Activated CD4-positive, alpha-beta T cell treated with anti-CD3 and anti-CD28 coated beads, Interleukin-2, amount 10 ng/mL, durations not matched to agents 24 days and 14 days (primary cell): ENCODE measurements at regions of chr14 and their contacts with region 1.

Region 1: DNA sequence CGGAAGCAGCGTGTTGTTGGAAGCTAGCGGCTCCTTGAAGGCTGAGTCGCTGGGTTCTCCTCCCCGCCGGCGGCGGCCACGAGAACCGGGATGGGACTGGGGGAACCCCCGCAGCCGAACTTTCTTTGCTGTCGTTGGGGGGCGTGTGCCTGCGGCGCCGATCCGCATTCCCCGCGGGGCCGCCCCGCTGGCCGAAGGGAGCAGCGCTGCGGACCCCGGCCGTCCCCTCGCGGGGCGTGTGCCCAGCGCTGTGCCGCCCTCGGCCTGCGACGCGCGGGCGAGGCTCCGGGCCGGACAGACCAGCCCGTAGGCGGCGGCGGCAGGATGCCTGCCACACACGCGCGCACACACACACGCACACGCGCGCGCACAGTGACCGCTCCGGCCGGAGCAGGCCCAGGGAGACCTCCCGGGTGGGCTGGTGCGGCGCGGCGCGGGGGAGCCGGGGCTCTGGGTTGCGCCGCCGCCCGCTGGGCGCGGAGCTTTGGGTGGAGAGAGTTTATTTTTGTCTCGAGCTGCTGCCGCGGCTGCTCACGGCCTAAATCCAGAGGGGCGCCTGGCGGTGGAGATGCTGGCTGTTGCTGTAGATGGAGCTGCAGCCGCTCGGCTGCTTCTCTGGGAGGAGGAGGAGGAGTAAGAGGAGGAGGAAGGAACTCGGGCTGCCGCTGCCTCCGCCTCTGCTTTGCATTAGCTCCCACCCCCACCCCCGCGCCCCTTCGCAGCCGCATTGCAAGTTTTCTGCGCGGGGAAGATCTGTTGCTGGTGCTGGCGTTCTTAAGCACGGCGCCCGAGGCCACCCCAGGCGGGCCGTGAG is at the start of gene SAMD4A:
- DNase-seq: peak; percentile 86
- H3K4me3 Mint-ChIP-seq: peak within 1 kb of the TSS; percentile 93
- H3K27ac Mint-ChIP-seq: peak within 1 kb of the TSS; percentile 87
- H3K4me1 Mint-ChIP-seq: peaks cover 21% of the 10 kb centered on the region
- H3K27me3 Mint-ChIP-seq: peaks cover 45% of the 10 kb centered on the region
- total RNA-seq, gene SAMD4A: 4.6 and 5.7 TPM in 2 replicates

Region 2: DNA sequence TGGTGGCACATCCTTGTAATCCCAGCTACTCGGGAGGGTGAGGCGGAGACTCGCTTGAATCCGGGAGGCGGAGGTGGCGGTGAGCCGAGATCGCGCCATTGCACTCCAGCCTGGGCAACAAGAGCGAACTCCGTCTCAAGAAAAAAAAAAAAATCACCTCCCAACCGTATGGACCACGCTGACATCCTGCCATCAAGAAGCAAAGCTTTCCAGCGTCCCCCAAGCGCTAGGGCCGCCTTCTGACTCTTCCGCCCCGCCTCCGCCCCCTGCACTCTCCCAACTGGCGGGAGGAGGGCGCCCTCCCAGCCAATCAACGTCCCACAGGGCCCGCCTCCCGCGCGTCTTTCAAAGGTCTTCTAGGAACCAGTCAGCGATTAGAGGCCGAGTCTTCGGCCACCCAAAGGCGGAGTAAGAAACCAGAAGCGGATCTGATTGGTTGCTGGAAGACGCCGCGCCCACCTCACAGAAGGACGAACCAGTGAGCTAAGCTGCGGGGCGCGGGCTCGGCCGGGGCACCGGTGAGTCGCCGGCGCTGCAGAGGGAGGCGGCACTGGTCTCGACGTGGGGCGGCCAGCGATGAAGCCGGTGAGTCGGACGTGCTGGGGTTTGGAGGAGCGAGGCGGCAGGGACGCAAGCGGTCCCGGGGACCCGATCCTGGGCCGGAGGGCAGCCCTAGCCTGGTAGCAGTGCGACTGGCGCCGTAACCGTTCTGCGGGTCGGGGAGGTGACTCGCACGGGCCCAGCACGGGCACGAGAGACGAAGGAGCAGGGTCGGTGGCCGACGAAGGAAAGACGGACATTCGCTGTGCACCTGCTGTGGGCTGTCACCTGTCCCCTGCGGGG is 169.9 kb before region 1 on chr14 and contains the start of gene CDKN3:
- intact Hi-C with region 1: loop called (anchors 2 kb)
- DNase-seq: peak; percentile 100
- H3K4me3 Mint-ChIP-seq: peak within 1 kb of the TSS; percentile 92
- H3K27ac Mint-ChIP-seq: peak within 1 kb of the TSS; percentile 86
- H3K4me1 Mint-ChIP-seq: peaks cover 26% of the 10 kb centered on the region
- H3K27me3 Mint-ChIP-seq: peaks cover under 1% of the 10 kb centered on the region
- total RNA-seq, gene CDKN3: 42.5 and 50.8 TPM in 2 replicates

Region 3: GRCh38 chr14:54627540-54628363 is 61.1 kb after region 1 on chr14:
- intact Hi-C with region 1: loop called (anchors 5 kb)
- DNase-seq: peak; percentile 88
- H3K4me3 Mint-ChIP-seq: peak overlapping the region; percentile 67
- H3K27ac Mint-ChIP-seq: peak overlapping the region; percentile 72
- H3K4me1 Mint-ChIP-seq: peaks cover 37% of the 10 kb centered on the region
- H3K27me3 Mint-ChIP-seq: no peaks in the 10 kb centered on the region

Region 4: DNA sequence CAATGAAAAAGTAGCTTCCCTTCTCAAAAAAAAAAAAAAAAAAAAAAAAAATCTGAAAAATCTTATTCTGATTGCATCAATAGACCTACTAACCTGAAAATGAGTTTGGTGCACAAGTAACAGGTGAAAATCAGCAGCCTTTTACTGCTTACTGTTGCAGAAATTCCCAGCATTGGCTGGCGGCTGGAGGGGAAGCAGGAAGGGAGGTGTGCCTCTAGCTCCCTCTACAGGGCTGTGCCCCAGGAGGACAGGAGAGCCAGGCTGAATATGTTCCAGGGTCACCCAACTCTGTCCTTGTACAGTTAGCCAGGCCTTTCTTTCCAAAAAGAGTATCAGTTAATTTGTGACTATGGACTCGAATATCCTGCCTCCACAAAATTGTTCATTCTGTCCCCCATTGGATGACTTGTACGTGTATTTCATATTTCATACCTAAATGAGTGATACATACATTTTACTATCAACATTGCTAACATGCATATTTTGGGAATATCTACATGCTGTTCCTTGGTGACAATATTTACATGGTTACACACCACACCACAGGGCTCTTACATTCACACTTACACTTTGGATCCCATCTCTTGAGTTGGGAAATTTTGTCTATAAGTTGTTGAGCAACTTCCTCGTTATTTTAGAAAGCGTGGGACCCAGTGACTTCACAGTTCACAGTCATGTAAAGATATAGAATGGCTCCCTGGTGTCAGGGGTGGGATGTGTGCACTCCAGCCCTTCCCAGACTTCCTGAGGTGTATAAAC is 125.1 kb after region 1 on chr14:
- intact Hi-C with region 1: loop called (anchors 1 kb)
- DNase-seq: peak; percentile 82
- H3K4me3 Mint-ChIP-seq: no peak overlapping the region
- H3K27ac Mint-ChIP-seq: no peak overlapping the region
- H3K4me1 Mint-ChIP-seq: peaks cover 23% of the 10 kb centered on the region
- H3K27me3 Mint-ChIP-seq: peaks cover 33% of the 10 kb centered on the region

Region 5: GRCh38 chr14:54773171-54773975 is 206.8 kb after region 1 on chr14:
- intact Hi-C with region 1: loop called (anchors 1 kb)
- DNase-seq: peak; percentile 93
- H3K4me3 Mint-ChIP-seq: peak overlapping the region; percentile 70
- H3K27ac Mint-ChIP-seq: peak overlapping the region; percentile 83
- H3K4me1 Mint-ChIP-seq: peaks cover 38% of the 10 kb centered on the region
- H3K27me3 Mint-ChIP-seq: peaks cover 3% of the 10 kb centered on the region

Region 6: GRCh38 chr14:54902521-54903420 is 336.2 kb after region 1 on chr14 and contains the start of gene GCH1:
- intact Hi-C with region 1: loop called (anchors 5 kb)
- DNase-seq: peak; percentile 95
- H3K4me3 Mint-ChIP-seq: peak within 1 kb of the TSS; percentile 90
- H3K27ac Mint-ChIP-seq: peak within 1 kb of the TSS; percentile 88
- H3K4me1 Mint-ChIP-seq: peaks cover 31% of the 10 kb centered on the region
- H3K27me3 Mint-ChIP-seq: no peaks in the 10 kb centered on the region
- total RNA-seq, gene GCH1: 49.8 and 49.9 TPM in 2 replicates